PC-9 (cell line): ENCODE measurements at regions of chr3 and their contacts with region 1.

Region 1: DNA sequence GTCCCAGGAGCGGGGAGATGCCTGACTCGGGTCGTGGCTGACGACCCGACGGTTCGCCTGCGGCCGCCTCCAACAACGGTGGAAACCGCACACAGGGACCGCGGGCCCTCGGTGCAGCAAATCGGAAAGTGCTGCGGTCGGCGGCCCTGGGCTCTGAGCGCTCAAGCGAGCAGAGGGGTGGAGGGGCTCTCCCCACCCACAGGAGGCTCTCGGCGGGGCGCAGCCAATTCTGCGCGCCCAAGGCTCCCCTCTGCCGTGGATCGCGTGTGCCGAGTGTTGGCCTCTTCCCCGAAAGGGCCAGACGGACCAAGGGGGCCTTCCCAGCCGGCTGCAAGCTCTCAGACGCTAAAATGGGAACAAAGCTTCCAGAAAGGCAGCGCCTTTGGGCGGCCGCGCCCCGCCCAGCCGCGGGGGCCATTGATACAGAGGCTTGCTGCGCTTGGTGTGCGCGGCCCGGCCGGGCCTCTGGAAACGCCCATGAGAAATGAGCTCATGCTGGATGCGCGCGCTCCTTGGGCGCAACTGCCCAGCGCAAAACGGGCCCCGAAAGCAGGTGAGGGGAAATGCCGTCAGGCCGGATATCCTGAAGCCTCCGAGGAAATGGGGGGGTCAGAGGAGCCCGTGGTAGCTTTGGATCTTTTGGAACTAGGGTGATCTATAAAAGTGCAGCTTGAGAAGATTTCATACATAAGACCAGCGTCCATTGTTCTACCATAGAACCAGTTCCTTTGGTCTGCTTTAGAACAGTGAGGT is 1.2 kb upstream of the GSK3B start:
- DNase-seq: peak; percentile 83 to 94
- H3K4me3 ChIP-seq: peak overlapping the region; percentile 75
- H3K27ac ChIP-seq: peak overlapping the region; percentile 100
- H3K4me1 ChIP-seq: peaks cover 32% of the 10 kb centered on the region
- H3K27me3 ChIP-seq: no peaks in the 10 kb centered on the region
- CTCF ChIP-seq: no peak

Region 2: GRCh38 chr3:118932822-118933558 is 1162.4 kb before region 1 on chr3:
- CTCF ChIA-PET with region 1: no interaction called
- POLR2A ChIA-PET with region 1: no interaction called
- intact Hi-C with region 1: no loop called
- DNase-seq: no peak
- H3K4me3 ChIP-seq: no peak overlapping the region
- H3K27ac ChIP-seq: no peak overlapping the region
- H3K4me1 ChIP-seq: no peaks in the 10 kb centered on the region
- H3K27me3 ChIP-seq: no peaks in the 10 kb centered on the region
- CTCF ChIP-seq: no peak

Region 3: DNA sequence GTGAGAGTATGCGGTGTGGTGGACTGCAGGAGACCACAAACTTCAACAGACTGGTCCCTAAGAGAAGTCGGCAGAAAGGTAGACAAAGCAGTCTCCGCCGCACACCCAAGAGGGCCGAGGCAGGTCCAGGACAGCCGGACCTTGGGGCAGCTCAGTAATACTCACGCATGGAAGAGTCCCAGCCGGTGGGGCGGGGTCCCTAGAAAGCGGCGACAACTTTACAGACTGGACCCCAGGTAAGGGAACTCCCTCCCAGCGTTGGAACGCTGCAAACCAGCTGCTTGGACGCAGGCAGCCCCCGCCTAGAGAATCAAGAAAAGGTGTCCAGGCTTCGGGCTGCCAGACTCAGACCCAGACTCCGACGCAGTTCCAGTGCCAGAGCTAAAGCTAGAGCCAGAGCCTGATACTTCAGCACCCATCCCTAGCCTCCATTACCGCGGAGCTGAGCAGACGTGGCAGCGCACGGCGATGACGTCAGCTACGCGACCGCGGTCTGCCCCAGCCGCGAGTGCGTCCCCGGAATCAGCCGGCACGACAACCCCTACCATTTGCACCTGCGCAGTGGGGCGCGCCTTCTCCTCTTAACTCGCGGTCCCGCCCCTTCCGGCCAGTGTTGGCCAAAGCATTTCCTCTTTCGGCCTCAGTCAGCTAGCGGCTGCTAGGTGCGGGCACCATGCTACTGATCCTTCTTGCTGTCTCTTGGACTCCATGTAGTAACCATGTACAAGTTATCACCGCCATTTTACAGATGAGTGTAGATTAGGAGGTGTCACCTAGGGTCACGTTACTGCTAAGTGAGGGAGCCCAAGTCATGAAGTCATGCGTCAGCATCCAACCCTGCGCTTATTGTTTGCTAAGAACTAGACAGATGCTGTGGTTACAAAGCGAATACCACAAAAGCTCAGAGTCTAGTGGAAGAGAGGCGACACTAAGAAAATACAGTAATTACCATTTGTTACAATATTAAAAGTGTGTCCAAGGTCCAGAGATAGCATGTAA is 631.9 kb before region 1 on chr3 and contains the start of gene TMEM39A:
- CTCF ChIA-PET with region 1: no interaction called
- POLR2A ChIA-PET with region 1: interaction called, 5 read pairs
- intact Hi-C with region 1: loop called (anchors 10 kb)
- DNase-seq: peak; percentile 92 to 99
- H3K4me3 ChIP-seq: peak within 1 kb of the TSS; percentile 87
- H3K27ac ChIP-seq: peak within 1 kb of the TSS; percentile 56
- H3K4me1 ChIP-seq: peaks cover 17% of the 10 kb centered on the region
- H3K27me3 ChIP-seq: no peaks in the 10 kb centered on the region
- CTCF ChIP-seq: peak; percentile 40; the same call in 1 of the 2 replicates
- total RNA-seq, gene TMEM39A: 46.8 and 51.7 TPM in 2 replicates

Region 4: DNA sequence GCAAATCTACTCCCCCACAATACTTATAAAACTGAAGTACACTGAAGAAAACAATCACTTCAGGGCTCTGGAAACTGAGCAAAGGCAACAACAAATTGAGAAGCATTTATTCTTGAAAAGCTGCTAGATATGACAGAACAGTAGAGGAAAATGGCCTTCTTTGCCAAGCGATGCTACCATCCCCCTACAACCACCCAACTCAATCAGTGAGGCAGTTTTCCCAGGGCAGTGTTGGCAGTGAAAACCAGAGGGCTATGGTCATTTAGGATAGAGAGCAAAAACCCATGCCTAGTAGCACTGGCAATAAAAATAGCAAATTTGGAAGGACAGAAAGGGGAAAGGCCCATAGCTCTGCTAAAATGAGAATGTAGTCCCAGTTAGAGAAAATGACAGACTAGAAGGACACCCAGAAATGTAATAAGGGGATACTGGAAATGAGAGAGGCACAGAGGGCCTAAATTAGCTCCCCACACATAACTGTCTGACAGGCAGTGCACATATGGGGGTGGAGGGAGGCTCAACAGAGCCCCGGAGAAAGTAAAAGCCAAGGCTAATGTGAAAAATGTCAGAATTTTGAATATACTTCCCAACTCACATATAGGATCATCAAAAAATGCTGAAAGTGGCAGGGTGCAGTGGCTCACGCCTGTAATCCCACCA is 144.6 kb before region 1 on chr3:
- CTCF ChIA-PET with region 1: no interaction called
- POLR2A ChIA-PET with region 1: interaction called, 15 read pairs
- intact Hi-C with region 1: no loop called
- DNase-seq: no peak
- H3K4me3 ChIP-seq: no peak overlapping the region
- H3K27ac ChIP-seq: no peak overlapping the region
- H3K4me1 ChIP-seq: no peaks in the 10 kb centered on the region
- H3K27me3 ChIP-seq: no peaks in the 10 kb centered on the region
- CTCF ChIP-seq: no peak

Region 5: DNA sequence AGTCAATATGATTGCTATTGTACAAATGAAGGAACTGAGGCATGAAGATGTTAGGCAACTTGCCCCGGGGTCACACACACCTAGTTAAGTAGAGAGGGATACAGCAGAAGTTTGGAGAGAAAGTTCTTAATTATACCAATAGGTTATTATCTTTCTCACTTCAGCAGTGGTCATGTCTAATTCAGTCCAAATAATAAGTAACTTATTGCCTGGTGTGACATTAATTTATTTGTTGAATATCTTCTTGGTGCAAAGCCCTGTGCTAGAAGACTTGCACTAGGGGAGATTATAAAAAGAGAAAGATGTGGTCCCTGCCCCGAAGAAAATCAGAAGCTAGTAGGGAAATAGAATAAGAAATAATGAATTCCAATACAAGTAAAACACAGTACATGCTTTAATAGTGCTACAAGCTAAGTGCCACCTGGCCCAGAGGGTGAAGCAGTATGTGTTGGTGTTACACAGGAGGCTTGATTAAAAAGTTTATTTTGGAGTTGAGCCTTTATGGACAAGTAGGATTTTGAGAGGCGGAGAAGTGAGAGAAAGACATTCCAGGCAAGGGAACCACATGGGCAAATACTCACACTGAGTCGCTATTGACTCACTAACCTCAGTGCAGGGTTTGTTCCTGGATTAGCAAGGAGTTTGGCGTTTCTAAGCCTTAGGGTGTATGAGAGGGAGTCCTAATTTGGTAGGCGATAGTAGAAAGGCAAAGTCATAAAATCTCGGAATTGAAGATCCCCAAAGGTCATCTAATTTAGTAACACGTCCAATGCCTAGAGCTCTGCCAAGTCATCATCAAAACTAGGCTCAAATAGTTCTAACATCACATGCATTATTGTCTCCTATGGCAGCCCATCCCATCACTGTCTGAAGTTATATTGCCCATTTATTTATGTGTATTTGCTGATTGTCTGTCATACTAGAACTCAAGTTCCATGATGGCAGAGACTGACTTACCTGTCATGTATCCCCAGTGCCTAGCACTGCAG is 18.0 kb after region 1 on chr3:
- CTCF ChIA-PET with region 1: no interaction called
- POLR2A ChIA-PET with region 1: interaction called, 13 read pairs
- intact Hi-C with region 1: no loop called
- DNase-seq: peak; percentile 18 to 87
- H3K4me3 ChIP-seq: no peak overlapping the region
- H3K27ac ChIP-seq: peak overlapping the region; percentile 66
- H3K4me1 ChIP-seq: peaks cover 28% of the 10 kb centered on the region
- H3K27me3 ChIP-seq: no peaks in the 10 kb centered on the region
- CTCF ChIP-seq: no peak

Region 6: DNA sequence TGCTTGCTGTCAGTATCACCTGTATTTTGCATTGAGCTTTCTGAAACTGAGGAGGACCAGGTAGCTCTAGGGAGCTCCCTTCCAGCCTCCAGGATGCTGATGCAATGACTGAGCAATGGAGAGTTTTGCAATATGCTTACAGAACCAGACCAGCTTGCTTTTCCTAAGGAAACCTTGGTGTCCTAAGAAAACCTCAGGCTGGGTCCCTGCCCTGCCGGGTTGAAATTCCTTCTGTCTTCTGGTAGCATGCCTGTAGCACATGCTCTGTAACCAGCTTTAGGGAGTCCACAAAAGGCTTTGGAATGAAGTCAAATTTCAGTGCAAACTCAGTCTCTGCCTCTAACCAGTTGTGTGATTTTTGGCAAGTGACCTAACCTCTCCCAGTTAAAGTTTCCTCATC is 64.6 kb after region 1 on chr3:
- CTCF ChIA-PET with region 1: interaction called, 3 read pairs
- POLR2A ChIA-PET with region 1: interaction called, 29 read pairs
- intact Hi-C with region 1: loop called (anchors 1 kb)
- DNase-seq: peak; percentile 90 to 99
- H3K4me3 ChIP-seq: no peak overlapping the region; the same call in 1 of the 2 replicates
- H3K27ac ChIP-seq: peak overlapping the region; percentile 98
- H3K4me1 ChIP-seq: peaks cover 43% of the 10 kb centered on the region
- H3K27me3 ChIP-seq: no peaks in the 10 kb centered on the region
- CTCF ChIP-seq: no peak

Region 7: DNA sequence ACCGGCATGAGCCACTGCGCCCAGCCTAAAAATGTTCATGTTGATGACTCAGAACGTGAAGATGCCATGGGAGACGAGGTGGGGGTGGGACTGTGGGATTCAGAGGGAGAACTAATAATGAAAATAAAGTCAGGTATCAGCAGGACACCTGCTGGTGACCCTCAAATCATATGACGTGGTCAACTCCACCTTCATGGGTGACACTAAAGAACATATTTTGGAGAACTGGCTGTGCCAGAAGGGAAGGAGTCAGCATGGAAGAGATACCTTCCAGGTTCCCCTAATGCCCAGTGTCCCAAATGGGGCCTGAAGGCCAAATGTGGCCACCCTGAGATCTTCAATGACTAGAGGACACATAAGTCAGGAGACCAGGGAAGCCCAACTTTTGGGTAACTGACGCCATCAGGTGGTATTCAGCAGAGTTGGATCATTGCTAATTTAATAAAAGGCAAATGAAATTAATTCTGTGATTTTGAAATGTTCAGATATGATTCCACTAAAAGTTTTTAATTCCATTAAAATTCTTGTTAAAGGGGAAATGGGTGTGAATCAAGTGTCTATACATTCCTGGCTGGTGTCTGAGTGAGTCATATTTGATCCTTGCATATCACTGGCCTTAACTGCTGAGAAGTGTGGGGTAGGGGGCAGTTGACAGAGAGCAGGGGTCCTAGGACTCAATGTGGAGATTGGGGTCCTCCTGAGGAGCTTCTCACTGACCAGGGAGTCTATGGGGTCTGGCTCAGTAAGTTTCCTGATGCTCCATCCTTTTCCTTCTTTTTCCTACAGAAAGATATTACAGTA is 87.5 kb after region 1 on chr3:
- CTCF ChIA-PET with region 1: interaction called, 4 read pairs
- POLR2A ChIA-PET with region 1: interaction called, 9 read pairs
- intact Hi-C with region 1: loop called (anchors 1 kb)
- DNase-seq: peak; percentile 53 to 57
- H3K4me3 ChIP-seq: no peak overlapping the region
- H3K27ac ChIP-seq: peak overlapping the region; percentile 7; the same call in 1 of the 2 replicates
- H3K4me1 ChIP-seq: peaks cover 38% of the 10 kb centered on the region
- H3K27me3 ChIP-seq: no peaks in the 10 kb centered on the region
- CTCF ChIP-seq: peak; percentile 61

Region 8: DNA sequence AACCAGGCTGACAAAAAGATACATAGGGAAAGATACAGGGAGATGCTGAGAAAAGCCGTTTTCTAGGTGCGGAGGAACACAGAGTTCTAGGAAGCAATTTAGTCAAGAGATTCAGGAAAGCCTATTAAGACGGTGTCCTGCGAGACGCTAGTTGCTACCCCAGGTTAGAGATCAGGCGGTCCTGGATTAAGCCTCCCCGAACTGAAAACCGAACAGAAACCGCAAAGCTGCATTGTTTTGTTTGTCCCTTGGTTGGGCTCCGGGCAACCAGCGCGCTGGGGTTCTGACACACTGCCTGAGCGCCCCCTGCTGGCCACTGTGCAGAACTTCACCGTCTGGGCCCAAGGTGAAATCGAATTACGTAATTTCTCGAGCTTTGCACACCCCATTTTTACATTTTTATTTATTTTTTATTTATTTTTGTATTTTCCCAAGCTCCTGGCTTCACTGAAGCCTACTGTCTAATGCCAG is 463.4 kb after region 1 on chr3:
- CTCF ChIA-PET with region 1: no interaction called
- POLR2A ChIA-PET with region 1: no interaction called
- intact Hi-C with region 1: loop called (anchors 10 kb)
- DNase-seq: peak; percentile 78 to 87
- H3K4me3 ChIP-seq: peak overlapping the region; percentile 57
- H3K27ac ChIP-seq: no peak overlapping the region
- H3K4me1 ChIP-seq: peaks cover 15% of the 10 kb centered on the region
- H3K27me3 ChIP-seq: no peaks in the 10 kb centered on the region
- CTCF ChIP-seq: peak; percentile 98